ENCODE measurements at regions of chr5 and their contacts with region 1.

Region 1: DNA sequence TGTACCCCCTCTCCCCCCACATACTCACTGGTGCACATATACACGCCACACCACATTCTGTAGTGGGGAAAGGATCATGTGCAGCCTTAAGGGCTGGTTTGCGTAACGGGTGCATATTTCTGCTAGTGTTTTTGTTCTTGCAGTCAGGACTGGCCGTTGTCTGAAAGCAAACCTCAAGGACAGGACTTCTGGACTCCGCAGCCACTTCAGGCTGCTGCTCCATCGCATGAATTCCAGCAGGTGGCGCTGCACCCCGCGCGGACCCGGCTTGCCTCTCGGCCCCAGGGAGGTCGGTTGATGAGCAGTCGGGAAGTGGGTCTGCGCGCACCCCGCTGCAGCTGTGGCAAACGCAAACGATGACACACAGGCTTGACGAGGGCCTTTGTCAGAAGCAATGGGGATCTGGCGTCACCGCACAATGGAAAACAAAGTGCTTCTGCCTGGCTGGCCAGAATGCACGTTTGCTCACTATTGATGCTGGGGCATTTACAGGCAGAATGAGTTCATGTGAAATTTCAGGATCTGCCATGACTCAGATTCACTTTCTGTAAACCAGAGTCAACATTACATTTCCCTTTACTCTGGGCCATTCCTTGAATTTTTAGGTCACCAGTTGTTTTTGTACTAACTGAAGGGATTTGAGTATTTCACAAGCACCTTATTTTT is 36.3 kb upstream of the GLRX start:
- DNase-seq: peak; percentile 96
- H3K4me3 Mint-ChIP-seq: peak overlapping the region; percentile 66
- H3K27ac Mint-ChIP-seq: peak overlapping the region; percentile 78
- H3K4me1 Mint-ChIP-seq: peaks cover 52% of the 10 kb centered on the region
- H3K27me3 Mint-ChIP-seq: no peaks in the 10 kb centered on the region

Region 2: GRCh38 chr5:96079075-96079474 is 220.3 kb after region 1 on chr5:
- intact Hi-C with region 1: loop called (anchors 1 kb)
- DNase-seq: no peak
- H3K4me3 Mint-ChIP-seq: peak overlapping the region; percentile 42
- H3K27ac Mint-ChIP-seq: peak overlapping the region; percentile 87
- H3K4me1 Mint-ChIP-seq: peaks cover 45% of the 10 kb centered on the region
- H3K27me3 Mint-ChIP-seq: no peaks in the 10 kb centered on the region

Region 3: GRCh38 chr5:96146675-96147074 is 287.9 kb after region 1 on chr5:
- intact Hi-C with region 1: no loop called
- DNase-seq: peak; percentile 53
- H3K4me3 Mint-ChIP-seq: no peak overlapping the region
- H3K27ac Mint-ChIP-seq: no peak overlapping the region
- H3K4me1 Mint-ChIP-seq: no peaks in the 10 kb centered on the region
- H3K27me3 Mint-ChIP-seq: peaks cover 5% of the 10 kb centered on the region

Region 4: GRCh38 chr5:96434201-96434645 is 575.4 kb after region 1 on chr5:
- intact Hi-C with region 1: loop called (anchors 10 kb)
- DNase-seq: peak; percentile 81
- H3K4me3 Mint-ChIP-seq: no peak overlapping the region
- H3K27ac Mint-ChIP-seq: no peak overlapping the region
- H3K4me1 Mint-ChIP-seq: peaks cover 12% of the 10 kb centered on the region
- H3K27me3 Mint-ChIP-seq: peaks cover 64% of the 10 kb centered on the region

Region 5: GRCh38 chr5:96601811-96602244 is 743.0 kb after region 1 on chr5:
- intact Hi-C with region 1: loop called (anchors 1 kb)
- DNase-seq: peak; percentile 89
- H3K4me3 Mint-ChIP-seq: no peak overlapping the region
- H3K27ac Mint-ChIP-seq: no peak overlapping the region
- H3K4me1 Mint-ChIP-seq: peaks cover 8% of the 10 kb centered on the region
- H3K27me3 Mint-ChIP-seq: peaks cover 15% of the 10 kb centered on the region